Mucosa of descending colon (tissue), 3 donors: ENCODE measurements at regions of chr20 and their contacts with region 1.

Region 1: DNA sequence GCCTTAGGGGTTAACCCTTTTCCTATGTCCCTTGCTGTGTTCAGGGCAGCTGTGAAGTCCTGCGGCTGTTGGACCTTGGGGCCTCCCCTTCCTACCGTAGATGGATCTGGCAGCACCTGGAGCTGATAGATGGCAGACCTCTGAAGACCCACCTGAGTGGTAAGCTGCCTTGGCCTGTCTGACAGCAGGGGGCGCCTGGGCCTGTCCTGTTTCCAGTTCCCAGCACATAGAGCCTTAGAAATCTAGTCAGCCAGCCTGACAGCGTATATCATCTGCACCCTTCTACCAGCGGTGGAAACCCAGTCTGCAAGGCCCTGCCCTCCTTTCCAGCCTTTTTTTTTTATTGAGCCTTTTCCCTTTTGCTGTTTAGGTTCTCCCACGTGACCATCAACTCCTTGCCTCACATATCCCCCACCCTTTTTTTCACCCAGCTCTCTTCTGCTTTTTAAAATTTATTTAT is 26.6 kb downstream of the CNBD2 start:
- DNase-seq: peak; percentile 79 to 94 (median 90)
- ATAC-seq: peak; percentile 95
- H3K4me3 ChIP-seq: no peak overlapping the region
- H3K4me1 ChIP-seq: no peaks in the 10 kb centered on the region
- CTCF ChIP-seq: peak; percentile 86

Region 2: DNA sequence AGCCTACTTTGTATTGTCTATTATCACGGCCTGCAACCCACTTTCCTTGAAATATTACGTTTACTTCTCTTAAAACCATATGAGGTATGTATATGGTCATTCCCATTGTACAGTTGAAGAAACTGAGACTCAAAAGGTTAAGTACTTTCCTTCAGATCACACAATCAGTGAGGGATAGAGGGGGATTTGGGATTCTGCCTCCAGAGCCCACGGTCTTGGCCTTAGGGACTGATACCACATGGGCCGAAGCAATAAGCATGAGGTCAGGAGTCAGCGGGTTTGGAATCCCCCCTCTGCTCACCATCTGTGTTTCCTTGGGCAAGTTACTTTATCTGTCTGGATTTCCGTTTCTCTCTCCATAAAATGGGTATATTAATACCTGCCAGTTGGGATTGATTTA is 140.1 kb after region 1 on chr20:
- intact Hi-C with region 1: loop called (anchors 2 to 5 kb)
- DNase-seq: no peak
- ATAC-seq: no peak
- H3K4me3 ChIP-seq: no peak overlapping the region
- H3K4me1 ChIP-seq: peaks cover 10% of the 10 kb centered on the region
- CTCF ChIP-seq: no peak

Region 3: GRCh38 chr20:36144336-36144735 is 149.3 kb after region 1 on chr20:
- intact Hi-C with region 1: loop called (anchors 2 to 5 kb)
- DNase-seq: no peak
- ATAC-seq: no peak
- H3K4me3 ChIP-seq: no peak overlapping the region
- H3K4me1 ChIP-seq: peaks cover 5% of the 10 kb centered on the region
- CTCF ChIP-seq: no peak